Mammary epithelial cell (primary cell): ENCODE measurements at regions of chr15 and their contacts with region 1.

Region 1: DNA sequence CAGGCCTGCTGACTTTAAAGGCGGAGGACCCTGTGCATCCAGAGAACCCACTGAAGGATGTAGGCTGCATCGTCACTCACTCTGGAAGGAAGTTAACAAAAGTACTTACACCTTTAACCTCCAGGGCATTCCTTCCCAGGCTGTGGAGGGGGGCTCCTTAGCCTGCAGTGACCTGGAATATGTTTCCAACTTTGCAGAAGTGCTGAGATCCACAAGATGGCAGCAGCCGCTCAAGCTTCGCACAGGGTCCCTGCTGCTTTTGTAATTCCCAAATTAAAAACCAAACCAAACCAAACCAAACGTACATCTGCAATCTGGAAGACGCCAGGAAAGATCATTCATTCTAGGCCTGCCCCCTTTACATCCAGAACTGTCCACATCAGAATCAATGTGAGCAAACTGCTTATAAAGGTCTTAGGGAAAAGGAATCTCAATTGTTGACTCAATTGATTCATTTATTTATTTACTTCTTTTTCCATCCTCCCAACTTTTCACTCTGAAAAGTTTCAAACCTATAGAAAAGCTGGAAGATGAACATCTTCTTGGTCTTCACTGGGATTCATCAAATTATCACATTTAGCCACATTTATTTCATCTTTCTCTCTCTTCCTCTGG is 70.5 kb upstream of the KLHL25 start:
- DNase-seq: no peak
- H3K4me3 ChIP-seq: no peak overlapping the region
- H3K27ac ChIP-seq: no peak overlapping the region
- H3K4me1 ChIP-seq: no peaks in the 10 kb centered on the region
- H3K27me3 ChIP-seq: no peaks in the 10 kb centered on the region
- CTCF ChIP-seq: peak; percentile 55 to 76

Region 2: DNA sequence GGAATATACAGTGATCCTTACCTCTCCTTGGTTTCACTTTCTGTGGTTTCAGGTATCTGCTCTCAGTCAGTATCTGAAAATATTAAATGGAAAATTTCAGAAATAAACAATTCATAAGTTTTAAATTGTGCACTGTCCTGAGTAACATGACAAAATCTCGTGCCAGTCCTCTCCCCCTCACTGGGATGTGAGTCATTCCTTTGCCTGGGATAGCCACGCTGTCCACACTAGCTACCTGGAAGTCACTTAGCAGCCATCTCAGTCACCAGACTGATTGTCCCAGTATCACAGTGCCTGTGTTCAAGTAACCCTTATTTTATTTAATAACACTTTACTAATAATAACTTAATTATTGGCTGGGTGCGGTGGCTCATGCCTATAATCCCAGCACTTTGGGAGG is 55.1 kb before region 1 on chr15:
- CTCF ChIA-PET with region 1: no interaction called
- dilution Hi-C with region 1: no loop called
- in situ Hi-C with region 1: no loop called
- intact Hi-C with region 1: no loop called
- DNase-seq: peak; percentile 27
- H3K4me3 ChIP-seq: no peak overlapping the region
- H3K27ac ChIP-seq: no peak overlapping the region
- H3K4me1 ChIP-seq: no peaks in the 10 kb centered on the region
- H3K27me3 ChIP-seq: no peaks in the 10 kb centered on the region
- CTCF ChIP-seq: no peak

Region 3: GRCh38 chr15:85920956-85921355 is 55.8 kb after region 1 on chr15:
- CTCF ChIA-PET with region 1: no interaction called
- dilution Hi-C with region 1: no loop called
- in situ Hi-C with region 1: no loop called
- intact Hi-C with region 1: no loop called
- DNase-seq: no peak
- H3K4me3 ChIP-seq: no peak overlapping the region
- H3K27ac ChIP-seq: no peak overlapping the region
- H3K4me1 ChIP-seq: no peaks in the 10 kb centered on the region
- H3K27me3 ChIP-seq: no peaks in the 10 kb centered on the region
- CTCF ChIP-seq: no peak

Region 4: DNA sequence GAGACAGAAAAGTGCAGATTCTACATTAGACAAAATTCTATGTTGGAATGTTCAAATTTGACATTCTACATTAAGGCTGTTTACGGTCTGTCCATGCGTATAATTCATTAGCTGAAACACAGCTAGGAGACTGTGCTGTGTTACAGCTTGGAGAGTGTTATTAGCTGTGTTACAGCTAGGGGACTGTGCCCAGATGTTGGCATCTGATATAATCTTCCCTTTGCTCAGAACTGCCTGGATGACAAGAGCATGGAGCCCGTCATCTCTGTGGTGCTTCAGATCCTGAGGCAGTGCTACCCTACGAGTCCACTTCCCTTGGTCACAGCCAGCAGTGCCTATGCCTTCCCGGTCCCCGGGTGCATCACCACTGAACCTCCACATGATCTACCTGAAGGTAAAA is 391.4 kb after region 1 on chr15:
- CTCF ChIA-PET with region 1: no interaction called
- dilution Hi-C with region 1: no loop called
- in situ Hi-C with region 1: no loop called
- intact Hi-C with region 1: no loop called
- DNase-seq: no peak
- H3K4me3 ChIP-seq: no peak overlapping the region
- H3K27ac ChIP-seq: no peak overlapping the region
- H3K4me1 ChIP-seq: no peaks in the 10 kb centered on the region
- H3K27me3 ChIP-seq: no peaks in the 10 kb centered on the region
- CTCF ChIP-seq: no peak

Region 5: DNA sequence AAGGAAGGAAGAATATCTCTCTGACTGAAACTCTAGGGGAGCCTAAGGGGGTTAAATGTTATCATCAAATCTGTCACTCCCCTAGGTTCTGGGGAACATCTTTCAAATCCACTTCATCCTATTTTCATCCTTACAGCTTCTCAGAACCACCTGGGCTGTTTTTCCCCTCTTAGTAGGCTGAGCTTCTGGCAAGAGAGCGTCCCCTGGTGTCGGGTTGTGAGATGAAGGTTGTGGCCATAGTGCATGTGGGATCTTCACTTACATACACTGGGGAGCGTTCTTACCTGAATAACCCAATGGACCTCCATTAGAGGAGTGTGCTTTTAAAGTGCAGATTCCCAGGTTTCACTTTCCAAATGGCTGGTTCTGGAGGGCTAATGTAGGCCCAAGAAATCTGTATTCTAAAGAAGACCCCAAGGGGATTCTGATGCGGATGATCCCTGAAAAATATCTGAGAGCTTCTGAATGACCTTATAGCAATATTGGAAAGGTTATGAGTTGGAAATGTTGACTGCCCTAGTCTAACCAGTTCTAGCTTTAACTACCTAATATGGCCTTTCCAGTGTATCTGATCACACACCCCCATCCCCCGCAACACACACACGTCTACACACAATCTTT is 878.2 kb after region 1 on chr15:
- CTCF ChIA-PET with region 1: no interaction called
- dilution Hi-C with region 1: no loop called
- in situ Hi-C with region 1: no loop called
- intact Hi-C with region 1: loop called (anchors 2 kb)
- DNase-seq: peak; percentile 43
- H3K4me3 ChIP-seq: no peak overlapping the region
- H3K27ac ChIP-seq: no peak overlapping the region
- H3K4me1 ChIP-seq: no peaks in the 10 kb centered on the region
- H3K27me3 ChIP-seq: no peaks in the 10 kb centered on the region
- CTCF ChIP-seq: peak; percentile 92 to 98

Region 6: GRCh38 chr15:86756692-86757091 is 891.5 kb after region 1 on chr15:
- CTCF ChIA-PET with region 1: no interaction called
- dilution Hi-C with region 1: no loop called
- in situ Hi-C with region 1: loop called in 1 of 2 experiments (anchors 10 kb)
- intact Hi-C with region 1: no loop called
- DNase-seq: no peak
- H3K4me3 ChIP-seq: no peak overlapping the region
- H3K27ac ChIP-seq: no peak overlapping the region
- H3K4me1 ChIP-seq: no peaks in the 10 kb centered on the region
- H3K27me3 ChIP-seq: peaks cover 3% of the 10 kb centered on the region
- CTCF ChIP-seq: peak in 1 of 2 donors; percentile 25